ENCODE measurements at regions of chr11 and their contacts with region 1.

Region 1: DNA sequence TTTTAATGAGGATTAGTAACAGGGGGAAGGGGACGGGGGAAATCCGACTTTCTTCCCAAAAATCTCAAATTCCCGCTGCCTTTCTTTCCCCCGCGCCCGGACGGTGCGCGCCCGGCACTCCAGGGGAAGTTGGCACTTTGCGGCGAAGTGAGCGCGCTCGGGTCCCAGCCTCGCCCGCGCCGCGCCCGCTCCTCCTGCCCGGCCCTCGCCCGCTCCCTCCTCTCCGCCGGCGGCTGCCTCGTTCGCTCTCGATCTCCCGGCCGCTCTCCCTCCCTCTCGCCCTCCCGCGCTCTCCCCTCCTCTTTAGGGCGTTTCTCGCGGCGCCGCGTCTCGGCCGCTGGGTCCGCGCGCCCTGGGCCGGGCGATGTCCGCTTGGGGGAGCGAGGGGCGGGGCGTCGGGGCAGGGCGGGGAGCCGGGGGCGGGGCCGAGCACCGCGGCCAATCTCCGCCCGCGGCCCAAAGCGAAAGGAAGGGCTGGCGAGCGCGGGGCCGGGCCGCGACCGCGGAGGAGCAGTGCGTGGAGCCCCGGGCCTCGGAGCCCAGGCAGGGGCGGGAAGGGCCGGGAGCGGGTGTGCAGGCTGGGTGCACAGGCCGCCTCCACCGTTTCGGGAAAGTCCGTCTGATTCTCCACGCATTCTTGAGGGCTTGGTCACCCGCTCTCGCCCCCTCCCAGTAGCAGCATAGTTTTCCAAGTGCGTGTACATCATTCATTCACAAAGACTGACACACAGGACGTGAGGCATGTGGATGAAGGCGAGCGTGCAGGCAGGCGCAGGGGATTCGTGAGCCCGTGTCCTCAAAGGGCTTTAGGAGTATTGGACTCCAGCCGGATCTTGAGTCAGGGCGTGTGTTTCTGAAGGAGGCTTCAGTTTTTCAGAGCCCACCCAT is 65.1 kb downstream of the ETS1 start:
- DNase-seq: peak; percentile 97
- H3K4me3 ChIP-seq: peak overlapping the region; percentile 66 to 82 (median 71)
- H3K27ac ChIP-seq: peak overlapping the region; percentile 94 to 97 (median 94)
- H3K4me1 ChIP-seq: peaks cover 0 to 42% (median 24%) of the 10 kb centered on the region in 4 donors
- H3K27me3 ChIP-seq: no peaks in the 10 kb centered on the region
- CTCF ChIP-seq: no peak
- EP300 ChIP-seq: no peak
- POLR2A ChIP-seq: peak; percentile 72 to 74

Region 2: GRCh38 chr11:128290106-128290840 is 232.0 kb before region 1 on chr11:
- intact Hi-C with region 1: loop called (anchors 1 kb)
- DNase-seq: peak; percentile 78
- H3K4me3 ChIP-seq: peak overlapping the region in 2 of 4 donors; percentile 22 to 25
- H3K27ac ChIP-seq: peak overlapping the region; percentile 30 to 68 (median 54)
- H3K4me1 ChIP-seq: peaks cover 0 to 21% (median 15%) of the 10 kb centered on the region in 4 donors
- H3K27me3 ChIP-seq: no peaks in the 10 kb centered on the region
- CTCF ChIP-seq: peak; percentile 80 to 85 (median 84)
- EP300 ChIP-seq: no peak
- POLR2A ChIP-seq: no peak

Region 3: DNA sequence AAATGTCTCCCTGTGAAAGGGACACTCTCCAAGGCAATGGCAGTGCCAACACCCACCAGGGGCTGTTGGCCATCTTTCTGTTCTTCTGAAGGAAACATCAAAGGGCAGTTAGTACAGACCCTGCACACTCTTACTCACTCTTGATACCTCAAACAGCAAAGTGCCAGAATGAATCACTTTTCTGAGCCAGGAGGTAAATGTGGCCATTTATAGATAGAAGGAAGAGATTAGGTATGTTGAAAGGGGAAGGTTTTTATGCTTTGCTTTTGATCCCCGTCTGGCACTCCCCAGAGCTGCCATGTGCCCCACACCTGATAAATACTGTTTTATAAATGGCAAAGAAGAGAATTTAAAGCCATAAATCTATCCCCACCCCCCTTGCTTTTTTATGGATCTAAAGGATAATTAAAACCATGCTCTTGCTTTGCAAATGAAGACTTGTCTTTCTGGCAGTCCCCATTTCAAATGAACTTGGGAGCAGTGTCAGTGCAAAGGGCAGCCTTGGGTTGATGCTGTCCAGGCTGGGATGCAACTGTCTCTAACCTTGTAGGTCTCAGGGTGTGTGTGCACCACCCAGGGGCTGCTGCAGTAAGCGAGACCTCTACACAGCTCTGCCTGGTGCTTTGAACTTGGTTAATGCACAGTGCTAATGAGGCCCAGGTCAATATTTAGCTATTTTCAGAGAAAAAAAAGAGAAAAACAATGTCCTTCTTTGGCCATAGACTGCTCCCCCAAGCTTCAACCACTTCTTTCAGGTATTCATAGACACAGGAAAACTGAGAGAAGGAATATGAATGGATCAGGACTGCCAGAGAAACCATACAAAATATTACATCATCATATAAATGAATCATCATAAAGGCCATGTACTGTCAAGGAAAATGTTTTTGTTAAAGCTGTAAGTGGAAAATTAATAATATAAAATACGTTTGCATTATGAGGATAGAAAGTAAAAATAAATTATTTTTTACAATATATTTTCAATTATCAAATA is 142.4 kb before region 1 on chr11:
- intact Hi-C with region 1: no loop called
- DNase-seq: no peak
- H3K4me3 ChIP-seq: no peak overlapping the region
- H3K27ac ChIP-seq: no peak overlapping the region
- H3K4me1 ChIP-seq: no peaks in the 10 kb centered on the region
- H3K27me3 ChIP-seq: no peaks in the 10 kb centered on the region
- CTCF ChIP-seq: no peak
- EP300 ChIP-seq: no peak
- POLR2A ChIP-seq: no peak

Region 4: GRCh38 chr11:128399251-128400121 is 122.8 kb before region 1 on chr11:
- intact Hi-C with region 1: loop called (anchors 5 kb)
- DNase-seq: no peak
- H3K4me3 ChIP-seq: no peak overlapping the region
- H3K27ac ChIP-seq: peak overlapping the region in 2 of 4 donors; percentile 68 to 70
- H3K4me1 ChIP-seq: peaks cover 0 to 43% (median 36%) of the 10 kb centered on the region in 4 donors
- H3K27me3 ChIP-seq: no peaks in the 10 kb centered on the region
- CTCF ChIP-seq: no peak
- EP300 ChIP-seq: no peak
- POLR2A ChIP-seq: no peak

Region 5: GRCh38 chr11:128453444-128454336 is 68.6 kb before region 1 on chr11:
- intact Hi-C with region 1: loop called (anchors 10 kb)
- DNase-seq: peak; percentile 91
- H3K4me3 ChIP-seq: no peak overlapping the region
- H3K27ac ChIP-seq: peak overlapping the region in 3 of 4 donors; percentile 41 to 56 (median 43)
- H3K4me1 ChIP-seq: peaks cover 0 to 28% (median 21%) of the 10 kb centered on the region in 4 donors
- H3K27me3 ChIP-seq: no peaks in the 10 kb centered on the region
- CTCF ChIP-seq: no peak
- EP300 ChIP-seq: peak in 2 of 4 donors; percentile 61 to 72
- POLR2A ChIP-seq: no peak

Region 6: DNA sequence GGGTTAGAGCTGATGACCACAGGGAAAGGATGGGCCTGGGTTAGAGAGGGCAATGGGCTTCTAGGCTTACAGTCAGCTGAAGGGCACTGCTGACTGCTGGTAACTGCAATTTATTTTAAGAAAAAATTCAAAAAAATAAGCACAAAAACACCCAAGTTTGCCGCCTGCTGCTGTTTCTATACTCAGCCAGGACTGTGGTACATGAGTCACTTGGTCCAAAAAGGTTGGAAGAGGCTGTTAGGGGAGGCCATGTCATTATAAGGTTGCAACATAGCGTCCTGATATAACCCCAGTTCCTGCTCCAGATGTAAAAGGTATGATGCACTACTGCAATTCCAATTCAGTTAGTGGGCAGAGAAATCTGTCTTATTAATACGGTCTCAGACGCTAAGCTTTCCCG is 33.8 kb before region 1 on chr11:
- intact Hi-C with region 1: no loop called
- DNase-seq: no peak
- H3K4me3 ChIP-seq: no peak overlapping the region
- H3K27ac ChIP-seq: peak overlapping the region in 3 of 4 donors; percentile 20 to 38 (median 27)
- H3K4me1 ChIP-seq: peaks cover 0 to 41% (median 4%) of the 10 kb centered on the region in 4 donors
- H3K27me3 ChIP-seq: no peaks in the 10 kb centered on the region
- CTCF ChIP-seq: no peak
- EP300 ChIP-seq: no peak
- POLR2A ChIP-seq: no peak

Region 7: GRCh38 chr11:128624269-128625175 is 102.2 kb after region 1 on chr11:
- intact Hi-C with region 1: loop called (anchors 10 kb)
- DNase-seq: no peak
- H3K4me3 ChIP-seq: no peak overlapping the region
- H3K27ac ChIP-seq: no peak overlapping the region
- H3K4me1 ChIP-seq: no peaks in the 10 kb centered on the region
- H3K27me3 ChIP-seq: no peaks in the 10 kb centered on the region
- CTCF ChIP-seq: no peak
- EP300 ChIP-seq: no peak
- POLR2A ChIP-seq: no peak

Region 8: GRCh38 chr11:128643661-128644317 is 121.5 kb after region 1 on chr11:
- intact Hi-C with region 1: no loop called
- DNase-seq: no peak
- H3K4me3 ChIP-seq: no peak overlapping the region
- H3K27ac ChIP-seq: no peak overlapping the region
- H3K4me1 ChIP-seq: no peaks in the 10 kb centered on the region
- H3K27me3 ChIP-seq: no peaks in the 10 kb centered on the region
- CTCF ChIP-seq: no peak
- EP300 ChIP-seq: no peak
- POLR2A ChIP-seq: no peak

Region 9: DNA sequence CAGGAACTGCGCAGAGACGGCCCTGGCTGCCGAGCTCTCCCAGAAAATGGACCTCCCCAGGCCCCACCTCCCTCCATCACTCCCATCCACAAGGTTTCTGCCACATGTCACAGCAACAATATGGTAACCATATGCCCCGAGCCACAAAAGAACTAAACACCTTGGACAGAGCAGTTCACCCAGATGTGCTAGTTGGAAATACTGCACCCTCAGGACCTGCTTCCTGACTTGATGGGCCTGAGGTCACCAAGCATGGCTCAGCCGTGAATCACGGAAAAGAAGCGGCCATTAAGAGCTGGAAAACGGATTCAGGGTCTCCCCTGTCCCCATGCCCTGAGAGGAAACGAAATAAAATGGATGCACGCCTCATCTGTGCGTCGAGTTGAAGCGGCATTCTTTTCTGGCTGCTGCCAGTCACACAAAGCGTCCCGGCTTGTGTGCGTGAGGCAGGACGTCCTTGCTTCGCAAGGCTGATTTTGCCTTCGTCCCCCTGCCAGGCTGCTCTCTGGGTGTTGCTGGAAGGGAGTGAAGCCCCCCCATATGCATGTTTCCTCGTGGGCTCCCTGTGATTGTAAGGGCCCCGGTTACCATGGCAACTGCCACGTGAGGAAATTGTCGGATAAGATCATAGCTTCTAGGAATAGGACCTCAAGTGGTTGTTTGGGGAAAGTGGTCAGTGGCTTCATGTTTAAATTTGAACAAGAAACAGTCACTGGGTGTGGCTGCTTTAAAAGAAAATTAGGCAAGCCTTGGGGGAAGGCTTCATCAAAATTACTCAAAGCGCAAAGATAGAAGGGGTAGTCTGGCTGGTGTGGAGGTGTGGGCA is 223.2 kb after region 1 on chr11:
- intact Hi-C with region 1: no loop called
- DNase-seq: no peak
- H3K4me3 ChIP-seq: no peak overlapping the region
- H3K27ac ChIP-seq: no peak overlapping the region
- H3K4me1 ChIP-seq: peaks cover 0 to 21% (median 13%) of the 10 kb centered on the region in 4 donors
- H3K27me3 ChIP-seq: no peaks in the 10 kb centered on the region
- CTCF ChIP-seq: no peak
- EP300 ChIP-seq: no peak
- POLR2A ChIP-seq: no peak